CD8-positive, alpha-beta T cell (primary cell): ENCODE measurements at regions of chr12 and their contacts with region 1.

Region 1: GRCh38 chr12:127083008-127083949 is 1183.7 kb upstream of the TMEM132C start:
- DNase-seq: peak in 2 of 9 experiments; percentile 47 to 59
- ATAC-seq: peak; percentile 61
- H3K4me3 ChIP-seq: peak overlapping the region; percentile 46 to 70
- H3K4me3 Mint-ChIP-seq: peak overlapping the region; percentile 75
- H3K27ac ChIP-seq: no peak overlapping the region
- H3K27ac Mint-ChIP-seq: peak overlapping the region; percentile 11
- H3K4me1 ChIP-seq: peaks cover 5% of the 10 kb centered on the region
- H3K4me1 Mint-ChIP-seq: peaks cover 11% of the 10 kb centered on the region
- H3K27me3 ChIP-seq: no peaks in the 10 kb centered on the region
- H3K27me3 Mint-ChIP-seq: no peaks in the 10 kb centered on the region
- CTCF ChIP-seq: no peak

Region 2: DNA sequence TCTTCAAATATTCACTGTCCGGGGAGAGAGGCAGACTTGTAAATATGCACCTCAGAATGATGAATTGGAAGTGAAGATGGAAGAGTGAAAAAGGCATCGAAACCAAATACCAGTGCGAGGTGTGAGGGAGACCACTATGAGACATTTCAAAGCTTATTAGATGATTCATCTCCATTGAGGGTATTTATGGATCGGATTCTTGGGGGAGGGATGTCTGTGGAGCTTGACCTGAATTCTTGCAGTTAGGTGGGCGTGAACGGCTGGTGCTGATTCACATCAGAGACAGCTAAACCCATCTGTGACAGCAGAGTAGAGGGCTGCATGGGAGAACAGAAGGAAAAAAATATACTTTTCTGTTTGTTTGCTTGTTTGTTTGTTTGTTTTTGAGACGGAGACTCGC is 1340.9 kb before region 1 on chr12:
- CTCF ChIA-PET with region 1: no interaction called
- POLR2A ChIA-PET with region 1: no interaction called
- intact Hi-C with region 1: loop called in 1 of 2 experiments (anchors 10 kb)
- DNase-seq: no peak
- ATAC-seq: no peak
- H3K4me3 ChIP-seq: no peak overlapping the region
- H3K4me3 Mint-ChIP-seq: no peak overlapping the region
- H3K27ac ChIP-seq: no peak overlapping the region
- H3K27ac Mint-ChIP-seq: no peak overlapping the region
- H3K4me1 ChIP-seq: no peaks in the 10 kb centered on the region
- H3K4me1 Mint-ChIP-seq: no peaks in the 10 kb centered on the region
- H3K27me3 ChIP-seq: no peaks in the 10 kb centered on the region
- H3K27me3 Mint-ChIP-seq: no peaks in the 10 kb centered on the region
- CTCF ChIP-seq: no peak

Region 3: DNA sequence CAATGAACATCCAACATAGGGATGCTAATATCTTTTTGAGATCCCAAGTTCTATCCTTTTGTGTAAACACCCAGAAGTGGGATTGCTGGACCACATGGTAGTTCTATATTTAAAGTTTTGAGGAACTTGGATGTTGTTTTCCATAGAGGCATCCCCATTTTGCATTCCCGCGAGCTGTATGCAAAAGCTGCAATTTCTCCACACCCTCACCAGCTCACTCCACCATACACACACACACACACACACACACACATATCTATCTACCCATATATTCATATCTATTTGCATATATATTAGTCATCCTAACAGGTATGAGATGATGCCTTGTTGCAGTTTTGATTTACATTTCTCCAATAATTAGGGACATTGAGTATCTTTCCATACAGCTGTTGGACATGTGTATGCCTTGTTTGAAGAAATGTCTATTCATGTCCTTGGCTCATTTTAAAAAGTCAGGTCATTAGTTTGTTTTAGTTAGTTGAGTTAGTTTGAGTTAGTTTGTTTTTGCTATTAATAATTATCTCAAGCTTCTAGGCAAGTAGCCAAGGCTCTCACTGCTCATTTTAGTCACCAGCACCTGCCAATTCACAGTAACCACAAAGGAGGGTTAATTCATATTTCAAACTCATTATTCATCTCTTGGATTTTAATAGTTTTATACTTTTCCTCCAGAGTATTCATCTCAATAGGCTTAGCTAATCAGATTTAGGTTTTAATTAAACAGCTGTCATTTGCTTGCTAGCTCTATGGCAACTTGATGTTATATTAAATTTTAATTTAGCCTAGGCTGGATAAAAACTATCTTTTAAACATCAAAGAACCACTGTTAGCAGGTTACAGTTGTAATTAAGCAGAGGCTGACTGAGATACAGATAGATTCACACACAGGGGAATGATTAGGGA is 252.2 kb before region 1 on chr12:
- CTCF ChIA-PET with region 1: no interaction called
- POLR2A ChIA-PET with region 1: no interaction called
- intact Hi-C with region 1: no loop called
- DNase-seq: no peak
- ATAC-seq: no peak
- H3K4me3 ChIP-seq: no peak overlapping the region
- H3K4me3 Mint-ChIP-seq: no peak overlapping the region
- H3K27ac ChIP-seq: no peak overlapping the region
- H3K27ac Mint-ChIP-seq: no peak overlapping the region
- H3K4me1 ChIP-seq: no peaks in the 10 kb centered on the region
- H3K4me1 Mint-ChIP-seq: no peaks in the 10 kb centered on the region
- H3K27me3 ChIP-seq: no peaks in the 10 kb centered on the region
- H3K27me3 Mint-ChIP-seq: peaks cover 11% of the 10 kb centered on the region
- CTCF ChIP-seq: no peak

Region 4: DNA sequence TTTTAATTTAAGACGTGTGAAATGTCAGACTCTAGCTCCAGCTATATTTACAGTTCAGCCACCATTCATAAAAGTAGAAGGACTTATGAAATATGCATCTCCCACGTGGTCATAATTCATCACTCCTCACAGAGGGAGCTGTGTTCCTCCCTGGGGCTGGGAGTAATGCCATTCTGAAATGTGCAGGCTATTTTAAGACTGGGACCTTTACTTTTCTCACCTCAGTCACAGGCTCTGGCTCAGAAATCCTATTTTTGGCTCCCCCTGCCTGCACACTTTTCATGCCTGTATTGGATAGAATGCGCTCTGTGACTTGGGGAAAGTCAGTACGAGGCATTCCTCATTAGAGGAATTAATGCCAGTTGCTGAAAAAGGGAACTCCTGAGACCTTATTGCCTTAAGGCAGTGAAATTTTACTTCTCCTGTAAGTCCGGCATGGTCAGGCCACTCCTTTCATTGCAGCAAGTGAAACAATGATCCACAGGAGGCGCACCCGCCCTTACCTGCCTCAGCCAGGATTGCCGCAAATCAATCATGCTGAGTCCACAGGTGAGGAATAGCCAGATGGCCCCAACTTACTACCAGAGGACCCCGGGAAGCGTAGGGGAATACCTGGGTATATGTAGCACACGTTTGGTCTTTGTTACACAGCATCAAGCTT is 50.5 kb after region 1 on chr12:
- CTCF ChIA-PET with region 1: no interaction called
- POLR2A ChIA-PET with region 1: no interaction called
- intact Hi-C with region 1: loop called in 1 of 2 experiments (anchors 5 kb)
- DNase-seq: no peak
- ATAC-seq: no peak
- H3K4me3 ChIP-seq: no peak overlapping the region
- H3K4me3 Mint-ChIP-seq: no peak overlapping the region
- H3K27ac ChIP-seq: no peak overlapping the region
- H3K27ac Mint-ChIP-seq: no peak overlapping the region
- H3K4me1 ChIP-seq: no peaks in the 10 kb centered on the region
- H3K4me1 Mint-ChIP-seq: no peaks in the 10 kb centered on the region
- H3K27me3 ChIP-seq: no peaks in the 10 kb centered on the region
- H3K27me3 Mint-ChIP-seq: no peaks in the 10 kb centered on the region
- CTCF ChIP-seq: no peak